Adrenal gland (tissue), 19 donors: ENCODE measurements at regions of chr10 and their contacts with region 1.

Region 1: DNA sequence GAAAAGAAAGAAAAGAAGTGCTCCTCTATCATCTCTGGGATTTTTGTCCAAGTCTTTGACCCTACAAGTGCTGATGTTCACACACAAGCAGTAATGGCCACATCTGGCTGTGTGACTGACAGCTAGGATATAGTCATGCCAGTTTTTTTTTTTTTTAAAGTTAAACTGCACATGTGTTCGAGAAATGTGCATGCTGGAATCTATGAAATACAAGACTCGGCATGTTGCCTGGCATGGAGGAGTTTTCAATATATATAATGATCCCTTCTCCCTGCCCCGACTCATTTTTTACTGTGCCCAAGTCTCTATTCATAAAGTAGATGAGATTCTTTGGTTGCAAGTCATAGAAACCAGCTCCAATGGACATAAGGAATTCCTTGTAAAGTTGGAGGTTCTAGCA is 60.4 kb upstream of the FGFR2 start:
- DNase-seq: no peak
- H3K4me3 ChIP-seq: no peak overlapping the region
- H3K27ac ChIP-seq: no peak overlapping the region
- H3K4me1 ChIP-seq: no peaks in the 10 kb centered on the region
- H3K27me3 ChIP-seq: no peaks in the 10 kb centered on the region
- CTCF ChIP-seq: no peak
- POLR2A ChIP-seq: no peak

Region 2: GRCh38 chr10:121624836-121625486 is 33.6 kb before region 1 on chr10:
- intact Hi-C with region 1: loop called in 1 of 2 experiments (anchors 2 kb)
- DNase-seq: no peak
- H3K4me3 ChIP-seq: no peak overlapping the region
- H3K27ac ChIP-seq: no peak overlapping the region
- H3K4me1 ChIP-seq: no peaks in the 10 kb centered on the region
- H3K27me3 ChIP-seq: no peaks in the 10 kb centered on the region
- CTCF ChIP-seq: no peak
- POLR2A ChIP-seq: no peak

Region 3: GRCh38 chr10:121851786-121852185 is 193.2 kb after region 1 on chr10:
- intact Hi-C with region 1: no loop called
- DNase-seq: no peak
- H3K4me3 ChIP-seq: no peak overlapping the region
- H3K27ac ChIP-seq: no peak overlapping the region
- H3K4me1 ChIP-seq: no peaks in the 10 kb centered on the region
- H3K27me3 ChIP-seq: no peaks in the 10 kb centered on the region
- CTCF ChIP-seq: no peak
- POLR2A ChIP-seq: no peak